ENCODE measurements at regions of chr13 and their contacts with region 1.

Region 1: GRCh38 chr13:85799097-85799582 is at the start of gene SLITRK6:
- DNase-seq: peak; percentile 50 to 79
- H3K4me3 ChIP-seq: no peak within 1 kb of the TSS
- H3K27ac ChIP-seq: no peak within 1 kb of the TSS
- H3K4me1 ChIP-seq: peaks cover 8% of the 10 kb centered on the region; the same call in 1 of the 2 replicates
- H3K27me3 ChIP-seq: no peaks in the 10 kb centered on the region
- CTCF ChIP-seq: no peak
- total RNA-seq, gene SLITRK6: 1.9 and 3.4 TPM in 2 replicates

Region 2: GRCh38 chr13:85363504-85363903 is 435.6 kb before region 1 on chr13:
- CTCF ChIA-PET with region 1: no interaction called
- POLR2A ChIA-PET with region 1: interaction called, 10 read pairs
- intact Hi-C with region 1: no loop called
- DNase-seq: no peak
- H3K4me3 ChIP-seq: no peak overlapping the region
- H3K27ac ChIP-seq: no peak overlapping the region
- H3K4me1 ChIP-seq: no peaks in the 10 kb centered on the region
- H3K27me3 ChIP-seq: no peaks in the 10 kb centered on the region
- CTCF ChIP-seq: no peak

Region 3: GRCh38 chr13:85586422-85586831 is 212.7 kb before region 1 on chr13:
- CTCF ChIA-PET with region 1: no interaction called
- POLR2A ChIA-PET with region 1: no interaction called
- intact Hi-C with region 1: loop called (anchors 2 kb)
- DNase-seq: peak; percentile 73 to 74
- H3K4me3 ChIP-seq: no peak overlapping the region
- H3K27ac ChIP-seq: peak overlapping the region; percentile 48
- H3K4me1 ChIP-seq: peaks cover 7% of the 10 kb centered on the region; the same call in 1 of the 2 replicates
- H3K27me3 ChIP-seq: no peaks in the 10 kb centered on the region
- CTCF ChIP-seq: no peak